ENCODE measurements at regions of chr12 and their contacts with region 1.

Region 1: GRCh38 chr12:43776498-43776897 is 17.7 kb downstream of the IRAK4 start:
- DNase-seq: no peak
- CTCF ChIP-seq: peak; percentile 31

Region 2: GRCh38 chr12:43550831-43551271 is 225.6 kb before region 1 on chr12:
- in situ Hi-C with region 1: no loop called
- DNase-seq: no peak
- CTCF ChIP-seq: no peak

Region 3: DNA sequence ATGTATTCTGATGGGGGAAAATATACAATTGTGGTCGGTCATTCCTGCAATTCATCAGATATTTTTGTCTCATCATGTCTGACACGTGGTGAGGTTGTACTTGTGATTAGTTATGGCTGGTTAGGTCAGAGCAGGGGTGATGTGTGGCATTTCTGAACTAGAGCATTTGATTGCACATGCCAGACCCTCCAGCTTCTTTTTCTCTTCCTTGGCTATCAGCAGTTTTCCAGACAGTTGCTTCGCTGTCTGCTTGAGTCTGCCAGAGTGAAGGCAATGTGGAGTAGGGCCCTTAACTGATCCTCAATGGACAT is 85.3 kb after region 1 on chr12:
- in situ Hi-C with region 1: no loop called
- DNase-seq: no peak
- CTCF ChIP-seq: no peak

Region 4: DNA sequence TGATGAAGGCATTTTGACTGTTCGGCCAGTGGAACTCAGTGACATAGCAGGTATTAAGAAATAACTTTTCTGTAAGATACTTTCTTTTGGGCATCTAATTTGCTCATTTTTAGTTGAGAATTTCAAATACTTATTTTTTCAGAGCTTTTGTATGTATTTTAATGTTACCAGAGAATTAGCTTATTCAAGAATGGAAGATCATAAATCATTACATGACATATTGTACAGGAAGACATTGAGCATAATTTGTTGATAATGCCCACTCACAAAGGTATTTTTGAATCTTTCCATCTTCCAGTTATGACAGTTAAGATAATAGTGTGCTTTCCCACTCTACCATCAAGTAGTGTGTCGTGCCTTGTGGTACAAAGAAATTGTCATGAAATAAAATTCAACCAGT is 95.9 kb after region 1 on chr12:
- in situ Hi-C with region 1: loop called (anchors 5 kb)
- DNase-seq: no peak
- CTCF ChIP-seq: no peak